ENCODE measurements at regions of chr17 and their contacts with region 1.

Region 1: GRCh38 chr17:63697341-63698286 is 2.3 kb downstream of the LIMD2 start:
- DNase-seq: peak in 1 of 2 experiments; percentile 82
- H3K4me3 ChIP-seq: peak overlapping the region in 1 of 4 experiments; percentile 83; a peak in 2 of 8 replicates
- H3K27ac ChIP-seq: no peak overlapping the region
- H3K4me1 ChIP-seq: peaks cover 3 to 25% (median 17%) of the 10 kb centered on the region in 4 experiments; a peak in 6 of 7 replicates
- H3K27me3 ChIP-seq: peaks cover 0 to 5% (median 0%) of the 10 kb centered on the region in 4 experiments; a peak in 3 of 7 replicates
- CTCF ChIP-seq: peak; percentile 76 to 82 (median 76)
- EP300 ChIP-seq: no peak
- POLR2A ChIP-seq: no peak; a peak in 2 of 3 replicates
- RAD21 ChIP-seq: peak; percentile 43 to 47

Region 2: GRCh38 chr17:63587770-63588169 is 109.8 kb before region 1 on chr17:
- CTCF ChIA-PET with region 1: no interaction called
- POLR2A ChIA-PET with region 1: no interaction called
- DNase-seq: no peak
- H3K4me3 ChIP-seq: no peak overlapping the region
- H3K27ac ChIP-seq: no peak overlapping the region
- H3K4me1 ChIP-seq: no peaks in the 10 kb centered on the region
- H3K27me3 ChIP-seq: no peaks in the 10 kb centered on the region
- CTCF ChIP-seq: no peak
- EP300 ChIP-seq: no peak
- POLR2A ChIP-seq: no peak
- RAD21 ChIP-seq: no peak

Region 3: GRCh38 chr17:63685041-63685440 is 12.6 kb before region 1 on chr17:
- CTCF ChIA-PET with region 1: interaction called, 63 read pairs
- POLR2A ChIA-PET with region 1: interaction called, 9 read pairs
- DNase-seq: no peak
- H3K4me3 ChIP-seq: no peak overlapping the region
- H3K27ac ChIP-seq: no peak overlapping the region
- H3K4me1 ChIP-seq: no peaks in the 10 kb centered on the region
- H3K27me3 ChIP-seq: no peaks in the 10 kb centered on the region
- CTCF ChIP-seq: no peak
- EP300 ChIP-seq: no peak
- POLR2A ChIP-seq: no peak
- RAD21 ChIP-seq: no peak

Region 4: DNA sequence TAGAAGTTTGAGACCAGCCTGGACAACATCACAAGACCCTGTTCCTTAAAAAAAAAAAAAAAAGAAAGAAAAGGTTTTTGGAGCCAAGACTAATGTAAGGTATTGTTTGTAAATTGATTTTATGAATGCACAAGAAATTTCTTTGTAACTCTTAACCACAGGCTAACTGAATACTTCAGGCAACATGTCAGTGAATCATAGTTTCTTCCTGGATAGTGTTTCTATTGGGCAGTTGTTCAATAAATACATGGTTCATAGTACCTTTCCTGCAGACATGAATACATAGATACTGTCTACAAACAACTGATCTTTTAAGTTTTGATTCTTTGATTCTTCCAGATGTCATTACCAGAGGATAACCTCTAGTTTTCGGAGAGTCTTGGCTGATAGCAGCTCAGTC is 87.9 kb after region 1 on chr17:
- CTCF ChIA-PET with region 1: no interaction called
- POLR2A ChIA-PET with region 1: no interaction called
- DNase-seq: no peak
- H3K4me3 ChIP-seq: no peak overlapping the region
- H3K27ac ChIP-seq: no peak overlapping the region
- H3K4me1 ChIP-seq: no peaks in the 10 kb centered on the region
- H3K27me3 ChIP-seq: no peaks in the 10 kb centered on the region
- CTCF ChIP-seq: no peak
- EP300 ChIP-seq: no peak
- POLR2A ChIP-seq: no peak
- RAD21 ChIP-seq: no peak

Region 5: GRCh38 chr17:63911657-63912426 is 214.2 kb after region 1 on chr17:
- CTCF ChIA-PET with region 1: no interaction called
- POLR2A ChIA-PET with region 1: no interaction called
- DNase-seq: peak in 1 of 2 experiments; percentile 87
- H3K4me3 ChIP-seq: no peak overlapping the region
- H3K27ac ChIP-seq: no peak overlapping the region
- H3K4me1 ChIP-seq: peaks cover 0 to 2% (median under 1%) of the 10 kb centered on the region in 4 experiments; a peak in 2 of 7 replicates
- H3K27me3 ChIP-seq: no peaks in the 10 kb centered on the region
- CTCF ChIP-seq: peak; percentile 63 to 83 (median 69)
- EP300 ChIP-seq: no peak
- POLR2A ChIP-seq: no peak
- RAD21 ChIP-seq: peak; percentile 62 to 65